Activated B cell treated with CpG ODN at 0.5 μM for 24 hours (primary cell): ENCODE measurements at regions of chr10 and their contacts with region 1.

Region 1: DNA sequence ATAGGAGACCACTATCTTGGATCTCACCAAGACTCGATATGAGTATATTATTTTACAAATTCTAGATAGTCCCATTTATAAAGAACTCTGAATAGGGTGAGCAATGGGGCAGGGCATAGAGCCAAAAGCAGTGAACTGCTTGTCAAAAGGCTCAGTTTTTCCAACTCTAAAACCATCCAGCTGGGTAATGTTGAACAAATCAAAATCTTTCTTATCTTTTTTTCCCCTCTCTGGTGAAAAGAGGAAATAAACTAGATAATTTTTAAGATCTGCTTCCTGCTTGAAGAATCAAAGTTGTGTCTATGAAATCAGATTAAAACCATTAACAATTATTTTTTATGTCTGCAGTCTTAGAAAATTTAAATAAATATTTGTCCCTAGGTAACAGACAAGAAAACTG is 178.6 kb downstream of the REEP3 start:
- DNase-seq: no peak
- ATAC-seq: no peak
- H3K4me3 Mint-ChIP-seq: no peak overlapping the region
- H3K27ac Mint-ChIP-seq: peak overlapping the region; percentile 57
- H3K4me1 Mint-ChIP-seq: peaks cover 49% of the 10 kb centered on the region
- H3K27me3 Mint-ChIP-seq: no peaks in the 10 kb centered on the region
- CTCF ChIP-seq: no peak

Region 2: DNA sequence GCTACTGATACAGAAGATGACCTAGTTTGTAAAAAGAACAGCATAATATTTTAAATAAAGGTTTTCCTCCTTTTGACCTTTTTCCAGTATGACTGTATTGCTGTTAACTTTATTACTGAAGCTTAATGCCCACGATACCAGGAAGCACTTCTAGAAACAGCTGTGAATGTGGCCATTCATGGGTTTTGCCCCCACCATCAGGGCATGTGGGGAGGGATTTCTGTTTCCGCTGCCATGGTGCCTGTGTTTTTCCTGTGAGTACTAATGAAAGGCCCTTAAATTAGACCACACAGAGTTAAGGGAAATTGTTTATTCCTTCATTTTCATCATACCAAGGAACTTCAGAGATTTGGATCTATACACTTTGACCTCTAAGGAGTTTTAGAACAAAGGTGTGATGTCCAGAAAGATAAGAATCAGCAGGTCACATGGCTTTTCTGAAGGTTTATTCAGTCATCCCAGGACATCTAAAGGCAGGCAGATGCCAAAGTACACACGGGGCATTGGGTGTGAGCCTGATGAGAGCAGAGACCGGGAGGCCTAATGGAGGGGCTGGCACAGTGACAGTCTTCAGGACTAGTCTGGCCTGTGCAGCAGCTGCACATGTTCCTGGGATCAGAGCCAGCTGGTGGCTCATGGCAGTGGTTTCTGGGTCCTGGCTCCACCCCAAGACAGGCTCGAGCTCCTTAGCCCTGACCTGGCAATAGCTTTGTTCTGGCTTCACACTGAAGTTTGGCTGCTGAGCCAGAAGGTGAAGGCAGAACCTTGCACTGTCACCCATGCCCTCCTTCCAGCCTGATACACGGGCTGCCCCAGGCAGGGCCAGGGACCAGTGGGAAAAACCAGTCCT is 12.3 kb after region 1 on chr10:
- CTCF ChIA-PET with region 1: no interaction called
- POLR2A ChIA-PET with region 1: no interaction called
- intact Hi-C with region 1: loop called (anchors 2 kb)
- DNase-seq: no peak
- ATAC-seq: no peak
- H3K4me3 Mint-ChIP-seq: no peak overlapping the region
- H3K27ac Mint-ChIP-seq: no peak overlapping the region
- H3K4me1 Mint-ChIP-seq: peaks cover 25% of the 10 kb centered on the region
- H3K27me3 Mint-ChIP-seq: no peaks in the 10 kb centered on the region
- CTCF ChIP-seq: no peak